Activated CD4-positive, alpha-beta T cell treated with anti-CD3 and anti-CD28 coated beads for 36 hours (primary cell): ENCODE measurements at regions of chr10 and their contacts with region 1.

Region 1: DNA sequence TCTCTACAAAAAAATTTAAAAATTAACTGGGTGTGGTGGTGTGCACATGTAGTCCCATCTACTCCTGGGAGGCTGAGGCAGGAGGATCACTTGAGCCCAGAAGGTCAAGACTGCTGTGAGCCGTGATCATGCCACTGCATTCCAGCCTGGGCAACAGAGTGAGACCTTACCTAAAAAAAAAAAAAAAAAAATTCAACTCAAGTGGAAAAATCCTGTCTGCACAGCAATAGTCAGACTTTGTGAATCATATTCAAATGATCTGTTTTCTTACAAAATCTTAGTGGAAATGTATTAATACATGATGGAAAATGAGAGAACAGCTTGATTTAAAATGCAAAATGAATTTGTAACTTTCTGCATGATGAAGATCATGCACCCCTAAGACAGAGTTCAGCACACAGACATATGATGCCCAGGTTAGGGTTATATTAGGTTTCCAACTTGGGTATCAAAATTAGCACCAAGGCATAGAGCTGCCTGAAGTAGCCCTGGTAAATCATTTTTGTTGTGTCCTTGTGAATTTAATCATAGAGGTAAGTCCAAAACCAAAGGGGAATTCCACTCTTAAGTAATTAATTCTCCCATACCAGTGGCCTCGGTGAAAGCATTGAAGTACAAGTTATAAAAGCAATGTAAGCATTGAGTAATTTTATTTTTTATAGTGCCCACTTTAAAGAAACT is 93.8 kb downstream of the ADD3 start:
- DNase-seq: peak; percentile 32
- ATAC-seq: peak; percentile 78
- H3K4me3 Mint-ChIP-seq: peak overlapping the region; percentile 2
- H3K27ac Mint-ChIP-seq: peak overlapping the region; percentile 84
- H3K4me1 Mint-ChIP-seq: peaks cover 71% of the 10 kb centered on the region
- H3K27me3 Mint-ChIP-seq: no peaks in the 10 kb centered on the region

Region 2: GRCh38 chr10:109996766-109997171 is 104.8 kb before region 1 on chr10:
- CTCF ChIA-PET with region 1: no interaction called
- POLR2A ChIA-PET with region 1: no interaction called
- intact Hi-C with region 1: no loop called
- DNase-seq: no peak
- ATAC-seq: no peak
- H3K4me3 Mint-ChIP-seq: no peak overlapping the region
- H3K27ac Mint-ChIP-seq: no peak overlapping the region
- H3K4me1 Mint-ChIP-seq: peaks cover 24% of the 10 kb centered on the region
- H3K27me3 Mint-ChIP-seq: no peaks in the 10 kb centered on the region

Region 3: DNA sequence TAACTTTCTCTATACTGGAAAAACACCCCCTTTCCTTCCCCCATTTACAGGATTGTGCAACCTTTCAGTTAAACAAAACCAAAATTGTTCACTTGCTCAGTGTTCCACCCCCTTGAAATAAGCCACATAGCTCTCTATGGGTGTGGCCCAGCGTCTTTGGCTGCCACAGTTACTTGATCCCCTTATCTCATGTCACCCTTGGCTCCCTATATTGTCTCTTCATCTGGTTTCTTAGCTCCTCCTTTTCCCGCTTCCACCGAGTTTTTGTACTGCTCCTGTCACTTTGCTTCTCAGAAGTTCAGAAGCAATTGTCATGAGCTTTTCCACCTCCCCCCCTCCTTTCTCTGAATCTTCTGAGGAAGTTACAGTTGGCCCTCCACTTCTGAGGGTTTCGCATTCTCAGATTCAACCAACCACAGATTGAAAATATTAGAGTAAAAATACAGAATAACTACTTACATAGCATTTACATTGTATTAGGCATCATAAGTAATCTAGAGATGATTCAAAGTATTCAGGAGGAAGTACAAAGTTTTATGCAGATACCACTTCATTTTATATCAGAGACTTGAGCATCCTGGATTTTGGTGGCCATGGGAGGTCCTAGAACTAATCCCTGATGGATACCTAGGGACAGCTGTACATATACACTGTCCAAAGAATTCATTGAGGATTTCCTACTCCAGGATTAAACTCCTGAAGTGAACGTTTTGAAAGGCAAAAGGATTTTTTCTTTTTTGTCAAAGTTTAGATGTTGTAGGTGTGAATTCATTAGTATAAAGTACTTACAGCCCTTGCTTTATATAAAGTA is 33.4 kb before region 1 on chr10:
- CTCF ChIA-PET with region 1: interaction called, 4 read pairs
- POLR2A ChIA-PET with region 1: no interaction called
- intact Hi-C with region 1: loop called in 1 of 2 experiments (anchors 5 kb)
- DNase-seq: peak; percentile 71
- ATAC-seq: peak; percentile 89
- H3K4me3 Mint-ChIP-seq: peak overlapping the region; percentile 57
- H3K27ac Mint-ChIP-seq: peak overlapping the region; percentile 90
- H3K4me1 Mint-ChIP-seq: peaks cover 88% of the 10 kb centered on the region
- H3K27me3 Mint-ChIP-seq: no peaks in the 10 kb centered on the region

Region 4: GRCh38 chr10:110087682-110088081 is 13.9 kb before region 1 on chr10:
- CTCF ChIA-PET with region 1: interaction called, 13 read pairs
- POLR2A ChIA-PET with region 1: no interaction called
- intact Hi-C with region 1: loop called (anchors 2 kb)
- DNase-seq: no peak
- ATAC-seq: no peak
- H3K4me3 Mint-ChIP-seq: no peak overlapping the region
- H3K27ac Mint-ChIP-seq: peak overlapping the region; percentile 59
- H3K4me1 Mint-ChIP-seq: peaks cover 83% of the 10 kb centered on the region
- H3K27me3 Mint-ChIP-seq: no peaks in the 10 kb centered on the region

Region 5: DNA sequence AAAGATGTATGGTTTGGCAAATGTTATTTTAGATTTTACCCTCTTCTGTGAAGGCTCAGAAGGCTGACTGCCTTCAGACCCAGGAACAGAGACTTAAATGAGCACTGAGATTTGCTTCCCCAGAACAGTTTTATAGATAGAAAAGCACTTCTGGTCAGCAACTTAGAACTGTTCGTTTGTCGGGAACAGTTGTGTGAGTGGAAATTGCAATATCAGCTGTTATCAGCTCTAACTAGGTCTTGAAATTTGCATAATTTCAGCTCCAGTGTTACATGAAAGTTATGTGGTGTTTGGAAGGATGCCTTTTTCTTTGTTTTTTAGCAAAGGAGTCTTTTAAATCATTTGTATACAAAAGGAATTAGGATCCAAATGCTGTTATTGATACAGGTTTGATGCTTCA is 22.0 kb after region 1 on chr10:
- CTCF ChIA-PET with region 1: no interaction called
- POLR2A ChIA-PET with region 1: no interaction called
- intact Hi-C with region 1: no loop called
- DNase-seq: no peak
- ATAC-seq: no peak
- H3K4me3 Mint-ChIP-seq: no peak overlapping the region
- H3K27ac Mint-ChIP-seq: no peak overlapping the region
- H3K4me1 Mint-ChIP-seq: no peaks in the 10 kb centered on the region
- H3K27me3 Mint-ChIP-seq: no peaks in the 10 kb centered on the region

Region 6: DNA sequence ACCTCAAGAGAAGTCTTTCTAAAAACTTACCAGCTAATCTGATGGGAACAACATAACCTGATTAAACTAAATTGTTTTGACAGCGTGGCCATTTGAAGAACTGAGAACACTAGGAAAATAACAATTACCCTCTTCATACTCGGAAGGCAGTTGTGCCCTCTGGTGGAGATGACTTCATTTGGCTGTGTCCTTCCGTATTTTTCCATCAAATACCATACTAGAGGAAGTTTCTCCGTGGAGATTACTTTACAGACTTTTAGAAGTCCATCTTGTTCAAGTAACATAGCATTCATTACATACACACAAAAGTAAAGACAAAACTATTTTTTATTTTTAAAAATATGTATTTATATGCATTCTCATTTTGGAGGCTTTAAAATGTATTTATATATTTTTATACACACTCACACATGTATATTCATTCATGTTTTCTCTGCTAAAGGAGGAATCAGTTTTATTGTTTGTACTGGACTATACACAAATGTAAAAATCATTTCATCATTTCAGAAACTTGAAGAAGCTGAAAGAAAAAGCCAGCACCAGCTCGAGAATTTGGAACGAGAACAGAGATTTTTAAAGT is 177.9 kb after region 1 on chr10:
- CTCF ChIA-PET with region 1: no interaction called
- POLR2A ChIA-PET with region 1: no interaction called
- intact Hi-C with region 1: no loop called
- DNase-seq: peak; percentile 60
- ATAC-seq: peak; percentile 51
- H3K4me3 Mint-ChIP-seq: no peak overlapping the region
- H3K27ac Mint-ChIP-seq: no peak overlapping the region
- H3K4me1 Mint-ChIP-seq: peaks cover 23% of the 10 kb centered on the region
- H3K27me3 Mint-ChIP-seq: no peaks in the 10 kb centered on the region

Region 7: DNA sequence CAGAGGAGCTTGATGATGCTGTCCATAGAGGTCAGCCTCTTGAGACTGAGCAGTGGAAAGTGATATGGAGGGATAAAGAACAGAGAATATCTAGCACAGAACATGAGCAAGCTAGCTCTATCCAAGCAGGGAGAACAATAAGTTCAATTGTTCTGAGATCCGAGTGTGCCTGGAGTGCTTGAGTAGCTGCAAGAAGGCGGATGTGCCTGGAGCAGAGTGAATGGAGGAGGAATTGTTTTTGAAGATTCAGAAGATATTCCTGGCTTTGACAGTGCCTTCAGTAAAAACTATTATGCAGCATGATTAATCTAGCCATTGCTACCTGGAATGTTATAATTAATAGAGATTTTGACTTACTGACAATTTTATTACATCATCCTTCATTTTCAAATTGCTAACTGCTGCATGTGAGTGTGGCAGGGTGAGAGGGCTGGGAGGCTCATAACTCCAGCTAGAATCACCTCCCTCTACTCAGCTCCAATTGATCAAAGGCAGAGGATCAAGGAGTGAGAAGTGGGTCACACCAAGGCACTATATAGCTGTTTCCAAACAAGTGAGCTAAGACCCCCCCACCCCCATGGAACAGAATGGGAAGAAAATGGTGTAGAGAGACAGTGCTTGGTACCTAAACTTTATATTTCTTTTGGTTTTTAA is 1278.1 kb after region 1 on chr10:
- CTCF ChIA-PET with region 1: no interaction called
- POLR2A ChIA-PET with region 1: no interaction called
- intact Hi-C with region 1: no loop called
- DNase-seq: no peak
- ATAC-seq: no peak
- H3K4me3 Mint-ChIP-seq: no peak overlapping the region
- H3K27ac Mint-ChIP-seq: no peak overlapping the region
- H3K4me1 Mint-ChIP-seq: peaks cover 3% of the 10 kb centered on the region
- H3K27me3 Mint-ChIP-seq: peaks cover 18% of the 10 kb centered on the region